H1 (cell line): ENCODE measurements at regions of chr11 and their contacts with region 1.

Region 1: GRCh38 chr11:36564376-36565030 is 3.3 kb upstream of the RAG1 start:
- DNase-seq: peak in 1 of 2 experiments; percentile 53
- H3K4me3 ChIP-seq: peak overlapping the region in 3 of 4 experiments; percentile 7 to 50 (median 20); a peak in 4 of 8 replicates
- H3K27ac ChIP-seq: no peak overlapping the region
- H3K4me1 ChIP-seq: no peaks in the 10 kb centered on the region
- H3K27me3 ChIP-seq: no peaks in the 10 kb centered on the region
- CTCF ChIP-seq: peak in 2 of 3 experiments; percentile 57 to 83; a peak in 3 of 4 replicates
- EP300 ChIP-seq: no peak
- POLR2A ChIP-seq: no peak
- RAD21 ChIP-seq: peak; percentile 85 to 89

Region 2: GRCh38 chr11:36530840-36531239 is 33.7 kb before region 1 on chr11:
- CTCF ChIA-PET with region 1: no interaction called
- POLR2A ChIA-PET with region 1: no interaction called
- DNase-seq: no peak
- H3K4me3 ChIP-seq: no peak overlapping the region
- H3K27ac ChIP-seq: no peak overlapping the region
- H3K4me1 ChIP-seq: no peaks in the 10 kb centered on the region
- H3K27me3 ChIP-seq: no peaks in the 10 kb centered on the region
- CTCF ChIP-seq: no peak
- EP300 ChIP-seq: no peak
- POLR2A ChIP-seq: no peak
- RAD21 ChIP-seq: no peak

Region 3: DNA sequence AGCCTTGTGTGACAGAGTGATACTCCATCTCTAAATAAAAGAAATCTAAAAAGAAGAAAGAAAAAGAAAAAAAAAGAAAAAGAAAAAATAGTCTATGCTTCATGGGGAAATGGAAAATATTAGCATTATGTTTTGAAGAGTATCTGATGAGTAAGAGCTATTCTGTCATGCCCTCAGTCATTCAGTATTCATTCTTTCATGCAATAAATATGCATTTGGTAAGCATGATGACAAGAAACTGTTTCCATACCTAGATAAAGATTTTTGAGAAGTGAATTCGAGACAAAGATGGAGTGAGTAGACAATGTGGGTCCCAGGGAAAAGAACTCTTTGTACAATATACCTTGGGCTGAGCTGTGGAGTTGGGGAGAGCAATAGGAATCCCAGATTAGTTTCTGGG is 23.6 kb after region 1 on chr11:
- CTCF ChIA-PET with region 1: interaction called, 14 read pairs
- POLR2A ChIA-PET with region 1: no interaction called
- DNase-seq: no peak
- H3K4me3 ChIP-seq: no peak overlapping the region
- H3K27ac ChIP-seq: no peak overlapping the region
- H3K4me1 ChIP-seq: no peaks in the 10 kb centered on the region
- H3K27me3 ChIP-seq: peaks cover 0 to 4% (median 2%) of the 10 kb centered on the region in 4 experiments; a peak in 4 of 7 replicates
- CTCF ChIP-seq: no peak
- EP300 ChIP-seq: no peak
- POLR2A ChIP-seq: no peak
- RAD21 ChIP-seq: no peak

Region 4: DNA sequence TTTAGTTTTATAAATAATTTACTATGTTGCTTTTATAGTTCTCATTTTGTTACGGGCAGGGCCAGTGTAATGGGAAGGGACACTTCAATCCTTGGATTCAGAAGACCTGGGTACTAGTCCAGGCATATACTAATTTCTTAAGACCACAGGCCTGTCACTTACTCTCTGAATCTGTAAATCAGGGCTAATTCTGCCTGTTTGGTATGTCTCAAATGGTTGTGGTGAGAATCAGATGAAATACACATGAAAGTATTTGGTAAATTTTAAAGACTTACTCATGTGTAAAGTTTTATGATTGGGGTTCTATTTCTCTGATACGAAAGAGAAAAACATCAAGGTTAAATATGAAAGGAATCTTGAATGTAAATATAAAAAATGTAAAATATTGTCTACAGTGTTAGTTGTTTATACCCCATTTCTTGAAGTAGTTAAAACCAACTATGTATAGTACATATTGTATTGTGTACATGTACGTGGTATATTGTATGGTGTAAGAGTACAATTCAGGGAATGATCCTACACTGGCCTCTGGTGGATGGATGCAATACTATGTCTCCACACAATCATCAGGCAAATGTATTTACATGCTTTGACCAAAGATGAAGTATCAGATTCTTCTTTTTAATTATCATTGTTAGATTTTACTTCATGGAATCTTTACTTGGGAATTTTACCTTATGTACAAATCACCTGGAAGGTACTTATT is 58.1 kb after region 1 on chr11:
- CTCF ChIA-PET with region 1: interaction called, 25 read pairs
- POLR2A ChIA-PET with region 1: no interaction called
- DNase-seq: no peak
- H3K4me3 ChIP-seq: no peak overlapping the region
- H3K27ac ChIP-seq: no peak overlapping the region
- H3K4me1 ChIP-seq: no peaks in the 10 kb centered on the region
- H3K27me3 ChIP-seq: no peaks in the 10 kb centered on the region
- CTCF ChIP-seq: peak in 2 of 3 experiments; percentile 16 to 24; a peak in 2 of 4 replicates
- EP300 ChIP-seq: no peak
- POLR2A ChIP-seq: no peak
- RAD21 ChIP-seq: peak; percentile 49 to 54

Region 5: GRCh38 chr11:36684840-36685801 is 120.6 kb after region 1 on chr11:
- CTCF ChIA-PET with region 1: interaction called, 25 read pairs
- POLR2A ChIA-PET with region 1: no interaction called
- DNase-seq: no peak
- H3K4me3 ChIP-seq: no peak overlapping the region
- H3K27ac ChIP-seq: no peak overlapping the region
- H3K4me1 ChIP-seq: no peaks in the 10 kb centered on the region
- H3K27me3 ChIP-seq: no peaks in the 10 kb centered on the region
- CTCF ChIP-seq: no peak
- EP300 ChIP-seq: no peak
- POLR2A ChIP-seq: no peak
- RAD21 ChIP-seq: no peak

Region 6: DNA sequence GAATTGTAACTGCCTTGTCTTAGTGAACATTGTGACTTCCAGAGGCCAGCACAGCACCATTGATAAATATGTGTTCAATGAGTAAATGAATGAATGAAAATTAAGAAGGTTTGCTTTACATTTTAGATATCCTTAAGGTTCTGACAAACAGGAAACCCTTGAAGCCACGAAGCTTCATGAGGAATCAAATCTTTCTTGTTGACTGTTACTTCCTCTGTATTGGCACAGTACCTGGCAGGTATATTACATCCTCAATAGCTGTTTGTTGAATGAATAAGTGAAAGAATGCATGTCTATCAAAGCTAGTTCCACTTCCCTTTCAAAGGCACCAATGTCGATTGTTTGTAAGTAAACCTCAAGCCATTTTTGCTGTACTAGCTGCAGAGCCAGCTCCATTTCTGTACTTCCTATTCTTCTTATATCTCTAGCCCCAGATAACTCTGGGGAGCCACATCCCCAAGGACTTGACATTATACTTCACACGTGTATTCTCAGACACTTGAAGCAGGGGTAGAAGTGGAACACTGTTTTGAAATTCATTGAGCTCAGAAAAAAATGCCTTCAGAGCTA is 173.9 kb after region 1 on chr11:
- CTCF ChIA-PET with region 1: interaction called, 44 read pairs
- POLR2A ChIA-PET with region 1: no interaction called
- DNase-seq: no peak
- H3K4me3 ChIP-seq: no peak overlapping the region
- H3K27ac ChIP-seq: no peak overlapping the region
- H3K4me1 ChIP-seq: no peaks in the 10 kb centered on the region
- H3K27me3 ChIP-seq: no peaks in the 10 kb centered on the region; a peak in 1 of 7 replicates
- CTCF ChIP-seq: no peak
- EP300 ChIP-seq: no peak
- POLR2A ChIP-seq: no peak
- RAD21 ChIP-seq: no peak